Heart left ventricle (tissue), 16 donors: ENCODE measurements at regions of chr3 and their contacts with region 1.

Region 1: DNA sequence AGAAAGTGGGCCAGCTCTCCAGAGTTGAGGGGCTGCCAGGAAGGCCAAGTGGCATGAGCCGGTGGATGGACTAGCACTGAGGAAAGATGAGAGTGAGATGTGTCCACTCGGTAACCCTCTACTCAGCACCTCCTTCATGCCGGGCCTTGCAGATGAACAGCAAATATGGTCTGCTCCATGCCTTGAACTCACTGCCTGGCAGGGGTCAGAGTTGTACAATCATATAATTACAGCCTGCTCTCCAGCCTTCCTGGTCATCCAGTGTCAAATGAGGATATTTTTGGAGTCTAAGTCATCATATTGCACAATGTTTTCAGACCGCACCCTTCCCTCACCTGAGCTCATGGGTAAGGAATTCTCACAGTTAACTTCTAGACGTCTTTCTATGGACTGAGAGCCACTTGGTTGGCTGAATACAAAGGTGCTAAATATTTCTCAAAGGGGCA is 4.9 kb downstream of the MGLL start:
- DNase-seq: no peak
- ATAC-seq: peak; percentile 9 to 66 (median 58)
- H3K4me3 ChIP-seq: peak overlapping the region in 5 of 12 donors; percentile 8 to 17 (median 14)
- H3K27ac ChIP-seq: peak overlapping the region in 11 of 12 donors; percentile 17 to 97 (median 91)
- H3K4me1 ChIP-seq: peaks cover 10 to 91% (median 73%) of the 10 kb centered on the region in 12 donors
- H3K27me3 ChIP-seq: no peaks in the 10 kb centered on the region
- CTCF ChIP-seq: no peak
- POLR2A ChIP-seq: no peak

Region 2: DNA sequence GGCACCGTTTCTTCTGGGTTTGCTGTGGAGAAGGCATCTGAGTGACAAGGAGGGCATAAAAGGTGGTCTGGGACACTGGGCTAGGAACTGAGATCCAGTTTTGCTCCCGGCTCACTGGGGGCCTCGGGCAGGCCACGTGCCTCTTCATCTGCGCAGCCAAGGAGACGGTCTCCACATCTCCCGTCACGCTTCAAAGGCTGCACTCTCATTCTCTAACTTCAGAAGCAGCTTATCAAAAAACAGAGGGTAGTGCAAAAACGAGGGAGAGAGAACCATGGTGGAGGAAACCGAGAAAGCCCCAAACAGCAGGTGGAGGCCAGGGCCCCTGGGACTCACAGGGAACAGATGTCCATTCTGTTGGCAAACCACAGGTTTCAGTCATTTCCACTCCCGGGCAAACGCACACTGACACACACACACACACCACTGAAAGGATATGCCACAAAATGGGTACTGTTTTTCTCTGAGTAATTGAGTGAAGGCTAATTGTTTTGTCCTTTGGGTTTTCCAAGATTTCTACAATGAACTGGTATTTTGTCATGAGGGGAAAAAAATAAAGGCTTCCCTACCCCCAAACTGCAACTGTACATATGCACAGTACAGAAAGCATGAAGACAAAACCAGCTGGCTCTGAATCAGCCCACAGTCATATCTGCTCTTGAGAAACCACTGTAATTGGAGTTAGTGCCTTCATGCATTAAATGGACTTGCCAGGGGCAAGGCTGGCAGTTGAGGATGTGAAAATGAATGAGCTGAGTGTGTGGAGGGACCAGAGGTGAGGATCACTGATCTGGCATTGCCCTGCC is 67.0 kb before region 1 on chr3:
- intact Hi-C with region 1: loop called in 8 of 10 experiments (anchors 2 to 10 kb)
- DNase-seq: peak in 1 of 5 donors; percentile 23
- ATAC-seq: no peak
- H3K4me3 ChIP-seq: no peak overlapping the region
- H3K27ac ChIP-seq: peak overlapping the region; percentile 27 to 95 (median 86)
- H3K4me1 ChIP-seq: peaks cover 6 to 74% (median 56%) of the 10 kb centered on the region in 12 donors
- H3K27me3 ChIP-seq: no peaks in the 10 kb centered on the region
- CTCF ChIP-seq: no peak
- POLR2A ChIP-seq: no peak

Region 3: DNA sequence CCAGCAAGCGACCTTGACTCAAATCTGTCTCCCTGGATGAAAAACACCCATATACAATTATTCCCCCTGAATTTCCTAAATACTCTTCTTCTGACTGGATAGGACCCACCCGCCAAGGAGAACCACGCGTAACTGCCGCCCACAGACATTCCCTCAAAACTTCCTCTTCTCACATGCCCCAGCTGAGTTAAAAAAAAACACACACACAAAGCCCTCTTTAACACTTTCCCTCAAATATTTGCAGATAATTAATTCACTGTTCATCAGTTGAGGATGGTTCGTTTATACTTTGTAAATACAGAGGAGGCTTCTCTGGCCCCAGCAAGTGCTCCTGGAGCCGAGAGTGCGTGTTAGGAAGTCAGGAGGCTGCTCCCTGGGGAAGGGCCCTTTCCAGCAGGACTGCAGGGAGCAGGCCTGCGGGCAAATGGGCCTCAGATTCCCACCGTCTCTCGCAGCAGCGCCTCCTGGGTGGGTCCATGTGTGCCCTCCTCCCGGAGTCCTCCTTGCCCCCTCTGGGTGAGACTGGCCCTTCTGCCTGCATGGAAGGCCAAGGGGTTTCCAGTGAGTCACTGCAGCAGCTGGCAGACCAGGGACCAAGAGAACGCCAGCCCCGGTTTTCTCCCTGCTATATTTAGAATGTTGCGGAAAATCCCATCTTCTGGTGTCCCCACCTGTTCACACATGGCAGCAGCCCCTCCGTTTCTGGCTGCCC is 41.9 kb before region 1 on chr3:
- intact Hi-C with region 1: loop called in 2 of 10 experiments (anchors 5 kb)
- DNase-seq: peak in 4 of 5 donors; percentile 61 to 80 (median 69)
- ATAC-seq: peak in 3 of 4 donors; percentile 29 to 63 (median 62)
- H3K4me3 ChIP-seq: peak overlapping the region in 1 of 12 donors; percentile 3
- H3K27ac ChIP-seq: peak overlapping the region; percentile 24 to 79 (median 64)
- H3K4me1 ChIP-seq: peaks cover 9 to 87% (median 47%) of the 10 kb centered on the region in 12 donors
- H3K27me3 ChIP-seq: no peaks in the 10 kb centered on the region
- CTCF ChIP-seq: no peak
- POLR2A ChIP-seq: no peak

Region 4: DNA sequence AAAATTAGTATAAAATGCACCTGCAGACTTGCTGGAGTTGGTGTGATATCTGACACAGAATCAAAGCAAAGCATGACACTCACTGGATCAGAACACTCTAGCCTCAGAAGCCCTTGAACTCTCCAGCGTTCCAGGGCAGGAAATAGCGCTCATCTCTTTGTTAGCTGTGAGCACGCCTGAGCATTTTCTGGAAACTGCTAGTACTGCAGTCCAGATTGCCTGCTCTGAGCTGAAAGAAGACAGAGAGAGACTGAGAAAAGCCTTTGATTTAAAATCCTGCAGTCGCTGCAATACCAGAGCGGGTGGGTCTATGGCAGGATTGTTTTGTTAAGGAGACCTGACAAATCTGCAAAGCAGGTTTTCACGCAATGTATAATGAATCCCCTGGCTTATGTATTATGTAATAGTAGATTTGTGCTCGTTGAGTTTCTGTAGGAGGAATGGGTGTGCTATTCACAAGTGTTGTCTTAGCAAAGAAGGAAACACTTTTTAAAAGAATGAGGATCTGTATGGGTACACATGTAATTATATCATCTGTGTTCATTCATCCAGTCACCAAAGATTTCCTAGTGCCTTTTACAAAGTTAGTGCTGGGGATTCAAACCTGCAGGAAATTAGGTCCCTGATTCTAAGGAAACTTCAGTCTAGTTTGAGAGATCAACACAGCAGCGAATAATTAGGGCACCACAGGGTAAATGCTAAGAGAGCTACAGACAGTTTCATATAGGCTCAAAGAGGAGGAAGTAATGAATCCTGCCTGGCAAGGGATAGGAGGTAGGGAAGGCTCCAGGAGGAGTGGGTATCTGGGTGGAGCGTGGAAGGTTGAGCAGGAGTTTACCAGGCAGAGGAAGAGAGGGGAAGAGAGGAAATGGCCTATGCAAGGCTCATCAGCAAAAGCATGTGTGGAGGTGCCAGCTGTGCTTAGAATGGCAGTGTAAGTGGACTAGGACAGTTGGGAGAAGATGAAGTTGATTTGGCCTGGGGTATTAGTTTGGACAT is 31.0 kb after region 1 on chr3:
- intact Hi-C with region 1: no loop called
- DNase-seq: no peak
- ATAC-seq: peak in 2 of 4 donors; percentile 41 to 64
- H3K4me3 ChIP-seq: no peak overlapping the region
- H3K27ac ChIP-seq: no peak overlapping the region
- H3K4me1 ChIP-seq: peaks cover 0 to 7% (median 0%) of the 10 kb centered on the region in 12 donors
- H3K27me3 ChIP-seq: no peaks in the 10 kb centered on the region
- CTCF ChIP-seq: no peak
- POLR2A ChIP-seq: no peak